Activated CD4-positive, alpha-beta T cell treated with anti-CD3 and anti-CD28 coated beads, Interleukin-2, amount 10 ng/mL, durations not matched to agents 24 days and 14 days (primary cell): ENCODE measurements at regions of chr1 and their contacts with region 1.

Region 1: DNA sequence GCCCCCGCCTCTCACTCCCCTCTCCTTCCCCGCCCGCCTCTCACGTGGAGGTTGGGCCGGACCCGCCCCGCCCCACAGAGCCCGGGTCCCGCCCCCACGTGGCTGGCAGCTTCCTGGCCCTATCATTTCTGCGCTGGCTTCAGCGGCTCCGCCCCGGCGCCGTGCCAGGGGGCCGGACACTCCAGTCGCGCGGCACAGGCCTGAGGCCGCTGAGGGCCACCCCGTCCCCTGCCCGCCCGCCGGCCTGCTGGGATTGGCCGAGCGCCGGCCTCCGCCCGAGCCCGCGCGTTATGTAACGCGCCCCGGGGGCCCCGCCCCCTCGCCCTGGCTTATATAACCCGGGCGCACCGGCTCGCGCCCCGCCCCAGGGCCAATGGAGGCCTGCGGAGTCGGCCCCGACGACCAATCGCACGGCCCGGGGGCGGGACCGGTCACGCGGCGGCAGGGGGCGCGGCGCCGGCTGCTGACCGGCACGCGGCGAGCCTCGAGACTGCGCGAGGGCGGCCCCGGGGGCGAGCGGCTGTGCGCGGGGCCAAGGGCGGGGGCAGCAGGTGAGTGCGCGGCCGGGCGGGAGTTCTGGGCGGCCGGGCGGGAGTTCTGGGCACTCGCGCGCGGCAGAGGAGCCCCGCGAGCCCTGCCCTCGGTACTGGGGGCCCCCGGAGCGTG is at the start of gene PER3:
- DNase-seq: peak; percentile 97
- H3K4me3 Mint-ChIP-seq: peak within 1 kb of the TSS; percentile 76
- H3K27ac Mint-ChIP-seq: no peak within 1 kb of the TSS
- H3K4me1 Mint-ChIP-seq: peaks cover 20% of the 10 kb centered on the region
- H3K27me3 Mint-ChIP-seq: peaks cover 11% of the 10 kb centered on the region
- total RNA-seq, gene PER3: 4.2 and 4.8 TPM in 2 replicates

Region 2: DNA sequence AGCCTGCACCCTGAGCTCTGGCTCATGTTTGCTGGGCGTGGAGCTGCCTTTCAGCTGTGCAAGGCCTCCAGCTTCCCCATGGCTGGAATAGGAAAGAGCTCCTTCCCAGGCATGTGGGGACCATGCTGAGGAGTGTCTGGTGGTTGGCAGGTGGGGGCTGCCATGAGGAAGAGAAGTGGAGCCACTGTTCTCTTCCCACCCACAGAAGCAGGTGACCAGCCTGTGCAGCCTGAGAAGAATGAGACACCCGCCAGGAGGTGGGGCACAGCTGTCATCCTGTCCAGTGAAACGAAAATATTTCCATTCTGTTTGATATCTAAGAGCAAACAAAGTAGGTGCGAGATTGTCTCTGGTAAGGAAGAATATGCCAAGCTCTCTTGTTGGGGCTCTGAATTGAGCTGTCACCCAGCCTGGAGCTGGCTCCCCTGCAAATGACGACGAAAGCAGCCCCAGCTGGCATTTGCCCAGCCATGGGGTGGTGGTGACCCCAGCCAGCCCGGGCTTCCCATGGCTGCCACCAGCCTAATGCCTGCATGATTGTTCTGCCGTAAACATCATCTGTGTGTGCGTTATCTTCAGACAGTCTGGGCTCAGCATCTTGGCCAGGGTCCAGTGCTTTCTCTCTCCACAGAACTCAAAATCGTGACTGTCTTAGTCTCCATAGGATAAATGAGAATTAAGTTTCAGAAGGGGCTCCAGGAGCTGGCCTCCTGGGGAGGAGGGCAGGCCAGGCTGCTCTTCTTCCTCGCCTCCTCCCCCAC is 442.6 kb before region 1 on chr1:
- intact Hi-C with region 1: no loop called
- DNase-seq: no peak
- H3K4me3 Mint-ChIP-seq: no peak overlapping the region
- H3K27ac Mint-ChIP-seq: no peak overlapping the region
- H3K4me1 Mint-ChIP-seq: no peaks in the 10 kb centered on the region
- H3K27me3 Mint-ChIP-seq: no peaks in the 10 kb centered on the region

Region 3: DNA sequence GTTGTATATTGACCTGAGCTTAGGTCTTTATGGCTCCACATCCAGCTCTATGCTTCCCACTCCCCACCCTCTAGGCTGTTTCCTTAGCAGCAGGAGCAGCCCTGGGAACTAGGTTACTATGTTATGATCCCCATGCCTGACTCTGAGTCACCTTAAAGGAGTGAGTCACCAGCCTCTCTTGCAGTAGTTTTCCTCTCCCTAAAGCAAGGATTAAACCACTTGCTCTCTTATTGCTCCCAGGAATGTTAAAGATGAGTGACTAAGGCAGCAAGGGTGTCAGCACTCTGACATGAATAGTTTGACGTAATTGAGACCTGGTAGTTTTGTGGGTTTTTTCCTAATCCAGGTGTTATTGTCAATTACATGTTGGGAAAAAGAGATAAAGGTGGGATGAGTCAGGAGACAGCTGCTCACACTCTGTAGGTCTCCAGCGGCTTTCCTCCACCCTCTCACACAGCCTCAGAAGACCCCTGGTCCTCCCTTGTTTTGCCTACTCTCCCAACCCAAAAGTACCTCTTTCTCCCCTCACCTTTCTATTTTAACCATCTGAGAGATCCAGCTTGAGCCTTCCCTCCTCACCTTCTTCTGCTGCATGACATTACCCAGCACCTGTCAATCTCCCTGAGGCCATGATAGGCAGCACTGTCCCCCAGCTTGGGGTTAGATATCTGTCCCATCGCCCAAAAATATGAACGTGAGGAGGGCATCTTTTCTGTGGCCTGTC is 382.0 kb before region 1 on chr1:
- intact Hi-C with region 1: no loop called
- DNase-seq: peak; percentile 20
- H3K4me3 Mint-ChIP-seq: no peak overlapping the region
- H3K27ac Mint-ChIP-seq: no peak overlapping the region
- H3K4me1 Mint-ChIP-seq: no peaks in the 10 kb centered on the region
- H3K27me3 Mint-ChIP-seq: peaks cover 7% of the 10 kb centered on the region

Region 4: DNA sequence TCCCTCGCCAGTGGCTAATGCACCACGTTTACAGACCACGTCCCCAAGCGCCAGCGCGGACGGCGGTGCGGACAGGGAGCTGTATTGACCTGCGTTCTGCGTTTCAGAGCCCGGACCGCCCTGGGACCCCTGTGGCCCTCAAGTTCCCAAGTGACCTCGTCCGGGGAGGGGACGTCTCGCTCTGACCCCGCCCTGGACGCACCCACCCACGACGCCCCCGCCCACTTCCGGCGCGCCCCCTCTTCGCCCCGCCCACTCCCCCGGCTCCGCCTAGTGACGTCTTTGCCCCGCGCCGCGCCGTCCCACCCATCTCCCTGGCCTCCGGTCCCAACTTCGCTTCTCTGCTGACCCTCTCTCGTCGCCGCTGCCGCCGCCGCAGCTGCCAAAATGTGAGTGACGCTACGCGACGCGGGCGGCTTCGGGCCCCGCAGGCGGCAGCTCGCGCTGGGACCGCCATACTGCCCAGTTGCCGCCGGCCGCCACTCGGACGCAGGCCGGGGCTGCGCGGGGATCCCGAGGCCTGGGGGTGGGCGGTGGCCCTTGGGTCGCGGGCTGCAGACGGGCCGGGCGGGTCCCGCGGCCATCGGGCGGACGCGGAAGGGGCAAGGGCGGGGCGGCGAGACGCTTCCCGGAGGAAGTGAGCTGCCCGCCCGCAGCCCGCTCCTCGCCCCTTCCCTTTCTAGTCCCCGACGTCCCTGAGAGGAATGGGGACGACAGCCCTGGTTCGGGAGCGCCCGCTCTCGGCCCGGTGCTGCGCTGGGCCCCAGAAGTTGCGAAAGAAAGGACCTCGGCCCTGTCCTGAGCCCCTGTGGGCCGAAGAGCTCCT is 12.7 kb before region 1 on chr1 and contains the start of gene VAMP3:
- intact Hi-C with region 1: loop called (anchors 1 kb)
- DNase-seq: peak; percentile 94
- H3K4me3 Mint-ChIP-seq: peak within 1 kb of the TSS; percentile 90
- H3K27ac Mint-ChIP-seq: peak within 1 kb of the TSS; percentile 80
- H3K4me1 Mint-ChIP-seq: peaks cover 25% of the 10 kb centered on the region
- H3K27me3 Mint-ChIP-seq: peaks cover 26% of the 10 kb centered on the region
- total RNA-seq, gene VAMP3: 23.8 and 24.7 TPM in 2 replicates

Region 5: GRCh38 chr1:7961216-7962015 is 177.5 kb after region 1 on chr1 and contains the start of gene PARK7:
- intact Hi-C with region 1: loop called (anchors 5 kb)
- DNase-seq: peak; percentile 100
- H3K4me3 Mint-ChIP-seq: peak within 1 kb of the TSS; percentile 99
- H3K27ac Mint-ChIP-seq: peak within 1 kb of the TSS; percentile 100
- H3K4me1 Mint-ChIP-seq: peaks cover 45% of the 10 kb centered on the region
- H3K27me3 Mint-ChIP-seq: no peaks in the 10 kb centered on the region
- total RNA-seq, gene PARK7: 409 and 426 TPM in 2 replicates